Calu3 (cell line): ENCODE measurements at regions of chr18 and their contacts with region 1.

Region 1: GRCh38 chr18:12543697-12544096 is 114.2 kb downstream of the SPIRE1 start:
- DNase-seq: no peak
- H3K4me3 Mint-ChIP-seq: no peak overlapping the region
- H3K27ac Mint-ChIP-seq: peak overlapping the region; percentile 8
- H3K4me1 Mint-ChIP-seq: peaks cover 61% of the 10 kb centered on the region
- H3K27me3 Mint-ChIP-seq: no peaks in the 10 kb centered on the region
- CTCF ChIP-seq: no peak

Region 2: GRCh38 chr18:12507007-12507406 is 36.7 kb before region 1 on chr18:
- CTCF ChIA-PET with region 1: no interaction called
- intact Hi-C with region 1: no loop called
- DNase-seq: no peak
- H3K4me3 Mint-ChIP-seq: no peak overlapping the region
- H3K27ac Mint-ChIP-seq: no peak overlapping the region
- H3K4me1 Mint-ChIP-seq: no peaks in the 10 kb centered on the region
- H3K27me3 Mint-ChIP-seq: no peaks in the 10 kb centered on the region
- CTCF ChIP-seq: no peak

Region 3: GRCh38 chr18:12597775-12598174 is 54.1 kb after region 1 on chr18:
- CTCF ChIA-PET with region 1: interaction called, 3 read pairs
- intact Hi-C with region 1: loop called (anchors 5 kb)
- DNase-seq: peak; percentile 75
- H3K4me3 Mint-ChIP-seq: peak overlapping the region; percentile 18
- H3K27ac Mint-ChIP-seq: peak overlapping the region; percentile 74
- H3K4me1 Mint-ChIP-seq: peaks cover 63% of the 10 kb centered on the region
- H3K27me3 Mint-ChIP-seq: no peaks in the 10 kb centered on the region
- CTCF ChIP-seq: no peak